ENCODE measurements at regions of chr19 and their contacts with region 1.

Region 1: GRCh38 chr19:37972803-37973202 is 65.8 kb downstream of the SIPA1L3 start:
- DNase-seq: no peak
- ATAC-seq: no peak
- H3K4me3 Mint-ChIP-seq: no peak overlapping the region
- H3K27ac Mint-ChIP-seq: peak overlapping the region; percentile 31
- H3K4me1 Mint-ChIP-seq: peaks cover 71% of the 10 kb centered on the region
- H3K27me3 Mint-ChIP-seq: no peaks in the 10 kb centered on the region
- CTCF ChIP-seq: no peak

Region 2: DNA sequence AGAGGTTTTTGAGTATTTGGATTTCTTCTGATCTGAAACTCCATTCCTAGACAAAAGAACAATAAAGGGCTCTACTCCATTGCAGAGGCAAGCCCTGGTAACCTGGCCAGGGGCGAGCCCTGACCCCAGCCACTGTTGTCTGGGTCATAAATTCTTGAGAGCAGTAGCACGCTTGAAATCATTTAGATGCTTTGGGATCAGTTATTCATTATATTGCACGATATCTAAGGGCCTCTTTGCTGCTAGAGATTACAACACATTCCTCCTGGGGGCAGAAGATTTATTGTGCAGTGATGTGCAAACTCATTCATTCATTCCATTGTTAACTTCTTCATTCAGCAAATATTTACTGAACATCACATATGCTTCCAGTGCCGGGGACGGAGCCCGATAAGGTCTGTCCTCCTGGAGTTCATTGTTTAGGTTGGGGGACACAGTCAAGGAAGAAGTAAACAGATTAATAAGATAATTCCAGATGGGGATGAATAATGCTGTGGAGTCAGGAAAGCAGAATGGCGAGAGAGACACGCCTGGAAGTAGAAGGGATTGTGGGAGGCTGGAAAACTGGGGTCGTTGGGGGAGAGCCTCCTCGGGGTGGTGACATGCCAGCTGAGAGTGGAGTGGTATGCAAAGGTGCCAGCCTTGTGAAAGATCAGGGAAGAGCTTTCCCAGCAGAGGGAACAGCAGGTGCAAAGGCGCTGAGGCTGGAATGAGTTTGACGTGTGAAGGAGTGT is 30.9 kb before region 1 on chr19:
- CTCF ChIA-PET with region 1: no interaction called
- POLR2A ChIA-PET with region 1: interaction called, 11 read pairs
- intact Hi-C with region 1: no loop called
- DNase-seq: no peak
- ATAC-seq: no peak
- H3K4me3 Mint-ChIP-seq: no peak overlapping the region
- H3K27ac Mint-ChIP-seq: no peak overlapping the region
- H3K4me1 Mint-ChIP-seq: peaks cover 60% of the 10 kb centered on the region
- H3K27me3 Mint-ChIP-seq: no peaks in the 10 kb centered on the region
- CTCF ChIP-seq: no peak

Measured in activated B cell treated with CpG ODN at 0.5 μM for 24 hours (primary cell).